ENCODE measurements at regions of chr2 and their contacts with region 1.

Region 1: DNA sequence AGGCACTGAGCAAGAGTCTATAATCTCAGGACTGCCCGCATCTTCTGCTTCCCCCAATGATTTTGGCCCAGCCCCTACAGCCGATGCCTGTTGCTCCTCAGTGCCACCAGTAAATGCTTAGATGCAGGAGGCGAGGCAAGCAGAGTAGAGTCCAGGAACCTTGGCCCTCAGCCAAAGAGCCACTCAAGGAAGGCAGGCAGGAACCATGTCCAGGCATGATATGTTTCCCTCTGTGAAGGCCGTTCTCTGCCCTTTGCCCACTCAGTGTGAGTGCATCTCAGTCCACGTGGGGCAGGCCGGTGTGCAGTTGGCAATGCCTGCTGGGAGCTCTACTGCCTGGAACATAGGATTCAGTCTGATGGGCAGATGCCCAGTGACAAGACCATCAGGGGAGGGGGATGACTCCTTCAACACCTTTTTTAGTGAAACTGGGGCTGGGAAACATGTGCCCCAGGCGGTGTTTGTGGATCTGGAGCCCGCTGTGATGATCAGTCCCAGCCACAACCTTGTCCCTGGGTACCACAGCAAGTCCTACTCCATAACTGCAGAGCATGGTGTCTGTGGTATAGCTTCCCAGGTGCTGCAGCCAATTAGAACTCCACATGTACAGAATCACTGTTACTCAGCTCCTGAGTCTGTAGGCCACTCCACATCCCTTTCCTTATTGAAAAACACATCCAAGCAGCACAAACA is 9.7 kb upstream of the DNAJB2 start:
- DNase-seq: no peak
- H3K4me3 ChIP-seq: no peak overlapping the region
- H3K27ac ChIP-seq: no peak overlapping the region
- H3K4me1 ChIP-seq: peaks cover 0 to 8% (median 6%) of the 10 kb centered on the region in 4 donors
- H3K27me3 ChIP-seq: no peaks in the 10 kb centered on the region
- CTCF ChIP-seq: no peak
- EP300 ChIP-seq: no peak
- POLR2A ChIP-seq: no peak

Region 2: DNA sequence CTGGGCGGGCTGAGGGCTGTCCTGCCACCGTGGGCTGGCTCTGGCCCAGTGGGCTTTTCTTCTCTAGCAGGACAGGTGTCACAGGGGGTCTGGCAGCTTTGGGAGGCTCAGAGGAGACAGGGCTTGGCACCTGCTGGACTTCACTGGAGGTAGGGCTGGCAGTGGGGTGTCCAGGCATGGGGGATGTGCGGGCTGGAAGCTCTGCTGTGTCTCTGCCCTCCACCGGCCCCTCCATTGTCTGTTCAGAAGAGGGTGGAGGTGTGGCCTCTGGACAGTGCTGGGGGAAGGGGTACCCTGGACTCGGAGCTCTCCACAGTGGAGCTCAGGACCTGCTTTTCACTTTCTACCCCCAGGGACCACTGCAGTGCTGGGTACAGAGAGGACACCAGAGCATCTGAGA is 30.5 kb after region 1 on chr2:
- intact Hi-C with region 1: loop called (anchors 5 kb)
- DNase-seq: no peak
- H3K4me3 ChIP-seq: no peak overlapping the region
- H3K27ac ChIP-seq: no peak overlapping the region
- H3K4me1 ChIP-seq: peaks cover 0 to 4% (median 3%) of the 10 kb centered on the region in 4 donors
- H3K27me3 ChIP-seq: peaks cover 0 to 21% (median 6%) of the 10 kb centered on the region in 3 donors
- CTCF ChIP-seq: no peak
- EP300 ChIP-seq: no peak
- POLR2A ChIP-seq: no peak

Measured in sigmoid colon (tissue), 7 donors.